ENCODE measurements at regions of chr16 and their contacts with region 1.

Region 1: DNA sequence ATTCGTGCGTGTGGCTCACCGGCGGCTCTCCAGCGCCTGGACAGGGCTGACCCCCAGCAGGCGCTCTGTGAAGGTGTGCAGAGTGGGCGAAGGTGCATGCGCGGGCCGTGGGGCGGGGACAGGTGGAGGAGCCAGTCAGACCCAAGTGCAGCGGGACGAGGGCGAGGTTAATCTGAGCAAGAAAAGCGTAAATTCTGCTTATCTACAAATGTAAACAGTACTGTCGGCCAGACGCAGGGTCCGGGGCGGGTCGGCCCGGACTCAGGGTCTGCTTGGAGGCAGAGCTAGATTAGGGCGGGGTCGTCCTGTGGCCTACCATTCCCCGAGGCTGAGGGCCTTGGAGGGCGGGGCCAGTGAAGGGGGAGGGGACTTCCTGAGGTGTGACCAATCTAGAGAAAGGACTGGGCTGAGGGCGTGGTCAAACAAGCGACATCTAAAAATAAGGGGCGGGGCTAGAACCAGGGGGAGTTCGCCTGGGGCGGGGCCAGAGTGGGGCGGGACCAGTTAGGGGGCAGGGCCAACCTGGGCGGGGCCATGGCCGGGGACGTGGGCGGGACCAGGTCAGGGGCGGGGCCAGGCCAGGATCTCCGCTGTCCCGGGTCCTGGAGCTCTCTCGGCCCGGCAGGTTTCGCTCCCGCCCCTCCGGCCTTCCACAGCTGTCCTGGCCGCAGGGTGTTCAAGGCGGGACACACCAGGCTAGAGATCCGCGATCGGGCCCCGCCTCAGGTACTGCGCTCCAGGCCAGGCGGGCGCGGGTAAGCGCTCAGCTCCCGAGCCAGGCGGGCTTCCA is at the start of gene SEC14L5:
- DNase-seq: peak; percentile 81
- H3K4me3 ChIP-seq: peak within 1 kb of the TSS; percentile 38 to 75 (median 52)
- H3K27ac ChIP-seq: peak within 1 kb of the TSS; percentile 64 to 78 (median 74)
- H3K4me1 ChIP-seq: peaks cover 10 to 43% (median 20%) of the 10 kb centered on the region in 3 donors
- H3K27me3 ChIP-seq: peaks cover 0 to 16% (median 0%) of the 10 kb centered on the region in 4 donors
- CTCF ChIP-seq: no peak
- POLR2A ChIP-seq: no peak
- total RNA-seq, gene SEC14L5: 0.22 to 5.6 (median 0.49) TPM

Region 2: GRCh38 chr16:4231367-4231766 is 726.5 kb before region 1 on chr16:
- intact Hi-C with region 1: no loop called
- DNase-seq: no peak
- H3K4me3 ChIP-seq: no peak overlapping the region
- H3K27ac ChIP-seq: no peak overlapping the region
- H3K4me1 ChIP-seq: peaks cover 0 to 12% (median 0%) of the 10 kb centered on the region in 3 donors
- H3K27me3 ChIP-seq: peaks cover 0 to 24% (median 0%) of the 10 kb centered on the region in 4 donors
- CTCF ChIP-seq: no peak
- POLR2A ChIP-seq: no peak

Region 3: GRCh38 chr16:4693296-4693955 is 264.5 kb before region 1 on chr16 and contains the start of gene NUDT16L1:
- intact Hi-C with region 1: loop called (anchors 10 kb)
- DNase-seq: peak; percentile 86
- H3K4me3 ChIP-seq: peak within 1 kb of the TSS; percentile 69 to 86 (median 82)
- H3K27ac ChIP-seq: peak within 1 kb of the TSS; percentile 84 to 96 (median 92)
- H3K4me1 ChIP-seq: peaks cover 18 to 57% (median 25%) of the 10 kb centered on the region in 3 donors
- H3K27me3 ChIP-seq: no peaks in the 10 kb centered on the region
- CTCF ChIP-seq: peak in 5 of 6 experiments; percentile 8 to 67 (median 42)
- POLR2A ChIP-seq: peak in 3 of 4 donors; percentile 41 to 77 (median 73)
- total RNA-seq, gene NUDT16L1: 18.5 to 27.8 (median 21.0) TPM

Region 4: GRCh38 chr16:4859900-4860255 is 98.0 kb before region 1 on chr16:
- intact Hi-C with region 1: no loop called
- DNase-seq: no peak
- H3K4me3 ChIP-seq: no peak overlapping the region
- H3K27ac ChIP-seq: peak overlapping the region in 1 of 4 donors; percentile 51
- H3K4me1 ChIP-seq: peaks cover 0 to 8% (median 0%) of the 10 kb centered on the region in 3 donors
- H3K27me3 ChIP-seq: no peaks in the 10 kb centered on the region
- CTCF ChIP-seq: no peak
- POLR2A ChIP-seq: no peak

Region 5: DNA sequence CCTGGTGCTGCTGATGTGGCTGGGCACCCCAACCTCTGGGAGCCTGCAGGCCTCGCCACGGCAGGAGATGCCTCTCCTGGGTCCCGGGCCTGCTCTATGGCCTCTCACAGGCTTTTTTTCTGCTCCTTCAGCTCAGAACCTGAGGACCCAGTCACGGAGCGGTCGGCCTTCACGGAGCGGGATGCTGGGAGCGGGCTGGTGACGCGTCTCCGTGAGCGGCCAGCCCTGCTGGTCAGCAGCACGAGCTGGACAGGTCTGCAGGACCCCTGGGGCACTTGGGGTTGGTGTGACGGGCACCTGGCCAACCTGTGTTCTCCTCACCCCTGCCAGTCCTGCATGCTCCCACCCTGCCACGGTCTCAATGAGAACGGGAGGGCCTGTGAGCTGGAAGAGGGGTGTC is 120.7 kb after region 1 on chr16:
- intact Hi-C with region 1: no loop called
- DNase-seq: no peak
- H3K4me3 ChIP-seq: no peak overlapping the region
- H3K27ac ChIP-seq: no peak overlapping the region
- H3K4me1 ChIP-seq: peaks cover 0 to 9% (median 0%) of the 10 kb centered on the region in 3 donors
- H3K27me3 ChIP-seq: no peaks in the 10 kb centered on the region
- CTCF ChIP-seq: no peak
- POLR2A ChIP-seq: no peak

Measured in esophagus squamous epithelium (tissue), 5 donors.